Naive thymus-derived CD4-positive, alpha-beta T cell (primary cell): ENCODE measurements at regions of chr1 and their contacts with region 1.

Region 1: GRCh38 chr1:243213045-243213787 is 41.9 kb downstream of the CEP170 start:
- DNase-seq: no peak
- ATAC-seq: no peak
- H3K4me3 ChIP-seq: no peak overlapping the region
- H3K4me3 Mint-ChIP-seq: no peak overlapping the region
- H3K27ac ChIP-seq: no peak overlapping the region
- H3K27ac Mint-ChIP-seq: peak overlapping the region in 1 of 9 donors; percentile 31
- H3K4me1 ChIP-seq: no peaks in the 10 kb centered on the region
- H3K4me1 Mint-ChIP-seq: peaks cover 0 to 11% (median 0%) of the 10 kb centered on the region in 7 donors
- H3K27me3 ChIP-seq: no peaks in the 10 kb centered on the region
- H3K27me3 Mint-ChIP-seq: no peaks in the 10 kb centered on the region

Region 2: GRCh38 chr1:243234978-243235647 is 21.9 kb after region 1 on chr1:
- CTCF ChIA-PET with region 1: no interaction called
- POLR2A ChIA-PET with region 1: no interaction called
- intact Hi-C with region 1: loop called in 1 of 2 experiments (anchors 2 kb)
- DNase-seq: no peak
- ATAC-seq: no peak
- H3K4me3 ChIP-seq: no peak overlapping the region
- H3K4me3 Mint-ChIP-seq: no peak overlapping the region
- H3K27ac ChIP-seq: no peak overlapping the region
- H3K27ac Mint-ChIP-seq: peak overlapping the region in 1 of 9 donors; percentile 18
- H3K4me1 ChIP-seq: no peaks in the 10 kb centered on the region
- H3K4me1 Mint-ChIP-seq: peaks cover 0 to 26% (median 16%) of the 10 kb centered on the region in 7 donors
- H3K27me3 ChIP-seq: no peaks in the 10 kb centered on the region
- H3K27me3 Mint-ChIP-seq: no peaks in the 10 kb centered on the region